H1 (cell line): ENCODE measurements at regions of chr11 and their contacts with region 1.

Region 1: GRCh38 chr11:45102810-45103621 is 43.4 kb upstream of the PRDM11 start:
- DNase-seq: peak in 1 of 2 experiments; percentile 77
- H3K4me3 ChIP-seq: no peak overlapping the region
- H3K27ac ChIP-seq: no peak overlapping the region
- H3K4me1 ChIP-seq: no peaks in the 10 kb centered on the region; a peak in 2 of 7 replicates
- H3K27me3 ChIP-seq: no peaks in the 10 kb centered on the region
- CTCF ChIP-seq: peak; percentile 67 to 97 (median 89)
- EP300 ChIP-seq: no peak
- POLR2A ChIP-seq: no peak
- RAD21 ChIP-seq: peak; percentile 99

Region 2: GRCh38 chr11:44814881-44815592 is 288.0 kb before region 1 on chr11:
- CTCF ChIA-PET with region 1: no interaction called
- POLR2A ChIA-PET with region 1: no interaction called
- DNase-seq: no peak
- H3K4me3 ChIP-seq: no peak overlapping the region
- H3K27ac ChIP-seq: no peak overlapping the region
- H3K4me1 ChIP-seq: no peaks in the 10 kb centered on the region
- H3K27me3 ChIP-seq: no peaks in the 10 kb centered on the region
- CTCF ChIP-seq: no peak
- EP300 ChIP-seq: no peak
- POLR2A ChIP-seq: no peak
- RAD21 ChIP-seq: no peak

Region 3: DNA sequence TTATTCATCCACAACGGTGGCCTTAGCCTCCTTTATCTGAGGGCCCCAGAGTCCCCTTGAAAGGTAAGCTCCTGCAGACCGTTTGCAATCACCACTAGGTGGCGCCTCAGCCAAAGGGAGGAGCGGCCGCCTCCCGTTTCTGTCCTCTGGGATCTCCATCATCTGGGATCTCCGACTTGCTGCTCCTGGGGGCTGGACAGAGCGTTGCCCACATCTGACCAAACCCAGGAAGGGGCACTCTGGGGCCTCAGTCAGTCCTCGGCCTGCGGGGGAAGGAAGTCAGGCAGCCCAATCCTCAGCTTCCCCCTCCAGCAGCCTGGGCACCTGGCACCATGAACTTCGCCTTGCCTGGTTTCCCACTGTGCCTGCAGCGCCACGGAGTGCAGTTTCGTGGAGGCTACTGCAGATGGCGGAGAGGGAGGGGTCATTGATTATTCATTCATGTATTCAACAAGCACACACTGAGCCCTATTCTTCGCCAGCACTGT is 175.8 kb before region 1 on chr11:
- CTCF ChIA-PET with region 1: interaction called, 1,347 read pairs
- POLR2A ChIA-PET with region 1: interaction called, 15 read pairs
- DNase-seq: peak; percentile 70 to 91
- H3K4me3 ChIP-seq: peak overlapping the region in 1 of 4 experiments; percentile 20; a peak in 1 of 8 replicates
- H3K27ac ChIP-seq: no peak overlapping the region
- H3K4me1 ChIP-seq: peaks cover 0 to 18% (median 13%) of the 10 kb centered on the region in 4 experiments; a peak in 6 of 7 replicates
- H3K27me3 ChIP-seq: no peaks in the 10 kb centered on the region
- CTCF ChIP-seq: peak; percentile 84 to 95 (median 93)
- EP300 ChIP-seq: no peak
- POLR2A ChIP-seq: no peak
- RAD21 ChIP-seq: peak; percentile 86 to 93

Region 4: GRCh38 chr11:44957040-44957515 is 145.9 kb before region 1 on chr11:
- CTCF ChIA-PET with region 1: interaction called, 112 read pairs
- POLR2A ChIA-PET with region 1: no interaction called
- DNase-seq: no peak
- H3K4me3 ChIP-seq: peak overlapping the region in 2 of 4 experiments; percentile 3 to 50; a peak in 3 of 8 replicates
- H3K27ac ChIP-seq: no peak overlapping the region
- H3K4me1 ChIP-seq: peaks cover 18 to 64% (median 40%) of the 10 kb centered on the region in 4 experiments
- H3K27me3 ChIP-seq: peaks cover 0 to 2% (median 0%) of the 10 kb centered on the region in 4 experiments; a peak in 3 of 7 replicates
- CTCF ChIP-seq: no peak
- EP300 ChIP-seq: no peak
- POLR2A ChIP-seq: no peak
- RAD21 ChIP-seq: no peak

Region 5: DNA sequence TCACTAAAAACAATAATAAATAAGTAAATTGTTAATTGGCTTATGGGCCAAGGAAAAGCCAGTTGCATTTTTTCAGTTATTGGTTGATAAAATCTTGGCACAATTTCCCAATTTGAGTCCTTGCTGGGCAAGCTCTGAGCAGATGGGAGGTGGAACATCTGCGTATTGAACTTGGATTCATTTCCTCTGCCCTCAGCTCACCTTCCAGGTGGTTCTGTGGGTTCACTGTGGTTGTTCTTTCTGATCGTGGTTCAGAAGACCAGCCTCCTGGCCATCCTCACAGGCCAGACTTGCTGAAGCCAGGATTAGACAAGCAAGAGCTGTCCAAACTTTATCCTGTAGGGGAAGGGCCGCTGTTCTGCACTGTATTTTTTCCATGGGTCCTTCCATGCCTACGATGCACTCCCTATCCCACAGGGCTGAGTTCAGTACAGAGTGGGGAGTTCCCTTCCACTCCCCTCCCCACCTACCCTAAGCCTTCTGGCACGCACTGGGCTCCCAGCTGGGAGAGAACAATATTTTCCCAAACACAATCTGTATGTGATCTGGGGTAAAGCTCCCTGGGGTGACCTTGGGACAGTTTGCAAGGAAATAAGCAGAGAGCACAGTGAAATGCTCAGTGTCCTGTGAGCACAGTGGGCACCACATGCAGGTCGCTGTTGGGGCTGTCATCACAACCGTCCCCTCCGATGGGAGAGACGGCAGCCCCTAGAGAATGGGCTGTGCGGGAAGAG is 108.9 kb before region 1 on chr11:
- CTCF ChIA-PET with region 1: interaction called, 13 read pairs
- POLR2A ChIA-PET with region 1: no interaction called
- DNase-seq: peak in 1 of 2 experiments; percentile 39
- H3K4me3 ChIP-seq: no peak overlapping the region
- H3K27ac ChIP-seq: no peak overlapping the region
- H3K4me1 ChIP-seq: no peaks in the 10 kb centered on the region
- H3K27me3 ChIP-seq: no peaks in the 10 kb centered on the region
- CTCF ChIP-seq: no peak
- EP300 ChIP-seq: no peak
- POLR2A ChIP-seq: no peak
- RAD21 ChIP-seq: no peak

Region 6: GRCh38 chr11:45042557-45042956 is 60.5 kb before region 1 on chr11:
- CTCF ChIA-PET with region 1: interaction called, 23 read pairs
- POLR2A ChIA-PET with region 1: no interaction called
- DNase-seq: no peak
- H3K4me3 ChIP-seq: no peak overlapping the region
- H3K27ac ChIP-seq: no peak overlapping the region
- H3K4me1 ChIP-seq: no peaks in the 10 kb centered on the region; a peak in 2 of 7 replicates
- H3K27me3 ChIP-seq: no peaks in the 10 kb centered on the region; a peak in 1 of 7 replicates
- CTCF ChIP-seq: no peak
- EP300 ChIP-seq: no peak
- POLR2A ChIP-seq: no peak
- RAD21 ChIP-seq: no peak

Region 7: DNA sequence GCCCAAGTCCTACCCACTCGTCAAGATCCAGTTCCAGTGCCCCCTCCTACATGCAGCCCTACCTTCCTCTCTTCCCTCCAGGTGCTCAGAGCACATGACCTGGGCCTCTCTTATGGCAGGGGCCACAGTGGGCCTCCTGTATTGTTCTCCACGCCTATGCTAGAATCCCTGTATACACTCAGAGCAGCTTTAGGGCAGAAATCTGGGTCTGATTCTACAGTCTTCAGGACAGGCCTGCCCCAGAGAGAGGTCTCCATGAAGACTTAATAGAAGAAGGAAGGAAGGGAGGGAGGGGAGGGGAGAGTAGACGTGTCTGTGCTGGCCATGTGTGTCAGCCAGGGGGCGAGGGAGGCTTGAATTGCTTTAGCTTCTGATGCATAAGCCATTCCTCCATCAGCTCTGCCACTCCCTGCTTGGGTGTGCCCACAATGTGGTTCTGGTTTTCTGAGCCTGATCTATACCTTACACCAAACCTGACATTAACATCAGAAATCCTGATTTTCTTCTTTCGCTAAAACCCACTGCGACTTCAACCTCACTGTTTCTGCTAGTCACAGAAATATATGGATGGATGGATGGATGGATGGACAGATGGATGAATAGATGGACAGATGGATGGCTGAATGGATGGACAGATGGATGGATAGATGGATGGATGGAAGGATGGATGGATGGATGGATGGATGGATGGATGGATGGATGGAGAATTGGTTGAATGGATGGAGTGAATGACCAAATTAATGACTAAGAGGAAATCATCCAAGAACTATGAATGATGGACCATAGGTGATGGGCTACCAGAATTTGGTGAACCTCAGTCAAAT is 13.1 kb before region 1 on chr11:
- CTCF ChIA-PET with region 1: interaction called, 127 read pairs
- POLR2A ChIA-PET with region 1: interaction called, 6 read pairs
- DNase-seq: no peak
- H3K4me3 ChIP-seq: no peak overlapping the region
- H3K27ac ChIP-seq: no peak overlapping the region
- H3K4me1 ChIP-seq: peaks cover 14 to 40% (median 26%) of the 10 kb centered on the region in 4 experiments
- H3K27me3 ChIP-seq: no peaks in the 10 kb centered on the region; a peak in 2 of 7 replicates
- CTCF ChIP-seq: peak; percentile 49 to 83 (median 71)
- EP300 ChIP-seq: no peak
- POLR2A ChIP-seq: no peak
- RAD21 ChIP-seq: peak; percentile 35 to 51; a peak in 3 of 4 replicates